K562 (cell line): ENCODE measurements at regions of chr1 and their contacts with region 1.

Region 1: DNA sequence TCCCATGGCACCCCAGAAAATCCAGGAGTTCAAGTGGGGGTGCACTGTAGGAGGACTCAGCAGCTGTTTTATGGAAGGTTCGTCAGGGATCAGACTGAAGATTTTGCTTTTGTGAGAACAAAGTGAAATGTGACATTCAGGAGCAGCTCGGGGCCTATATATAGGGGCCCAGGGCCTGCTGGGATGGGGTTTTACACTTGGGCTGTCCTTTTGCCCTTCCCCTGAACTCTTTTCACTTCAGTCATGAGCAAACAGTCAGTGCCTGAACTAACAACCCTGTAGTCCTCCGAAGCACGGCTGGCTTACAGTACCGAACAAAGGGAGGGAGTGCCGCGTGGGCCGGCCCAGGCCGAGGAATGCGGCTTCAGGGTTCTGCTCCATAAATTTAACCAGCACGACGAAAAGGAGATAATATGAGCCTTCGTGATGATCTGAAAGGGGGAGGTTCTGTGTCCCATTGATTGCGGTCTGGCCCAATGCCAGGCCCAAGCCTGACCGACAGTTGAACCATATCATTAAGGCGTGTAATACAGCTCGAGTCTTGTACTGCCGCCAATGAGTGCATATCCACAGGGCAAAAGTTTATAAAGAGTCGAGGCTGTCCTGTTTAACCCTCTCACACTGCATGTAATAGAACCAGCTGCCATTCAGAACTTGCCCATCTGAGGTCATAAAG is 139.9 kb downstream of the DHRS3 start:
- DNase-seq: peak; percentile 86 to 99 (median 90)
- ATAC-seq: peak; percentile 86
- H3K4me3 ChIP-seq: no peak overlapping the region; the same call in 1 of the 2 replicates
- H3K27ac ChIP-seq: peak overlapping the region; percentile 92
- H3K4me1 ChIP-seq: peaks cover 48 to 92% of the 10 kb centered on the region in 2 experiments
- H3K27me3 ChIP-seq: no peaks in the 10 kb centered on the region
- CTCF ChIP-seq: no peak
- EP300 ChIP-seq: peak; percentile 94
- POLR2A ChIP-seq: peak; percentile 71
- RAD21 ChIP-seq: peak in 1 of 2 experiments; percentile 63; a peak in 3 of 4 replicates

Region 2: DNA sequence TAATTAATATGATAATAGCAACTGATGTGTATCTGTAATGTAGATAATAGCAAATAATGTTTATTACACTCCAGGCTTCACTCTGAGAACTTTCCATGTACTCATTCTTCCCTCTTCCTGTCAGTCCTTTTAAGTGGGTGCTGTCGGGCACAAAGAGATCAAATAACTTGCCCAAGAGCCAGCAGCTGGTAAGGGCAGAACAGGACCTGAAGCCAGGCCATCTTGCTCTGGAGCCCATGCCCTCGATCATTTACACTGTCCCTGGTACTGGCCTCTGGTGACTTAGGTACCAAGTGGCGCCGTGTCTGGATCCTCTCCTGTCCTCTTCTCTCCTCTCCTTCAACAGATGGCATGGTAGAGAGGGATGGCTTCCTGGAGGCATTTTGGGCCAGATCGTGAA is 151.1 kb before region 1 on chr1:
- CTCF ChIA-PET with region 1: no interaction called
- POLR2A ChIA-PET with region 1: no interaction called
- in situ Hi-C with region 1: no loop called
- intact Hi-C with region 1: no loop called
- DNase-seq: no peak
- ATAC-seq: no peak
- H3K4me3 ChIP-seq: no peak overlapping the region
- H3K27ac ChIP-seq: no peak overlapping the region
- H3K4me1 ChIP-seq: no peaks in the 10 kb centered on the region
- H3K27me3 ChIP-seq: no peaks in the 10 kb centered on the region
- CTCF ChIP-seq: no peak
- EP300 ChIP-seq: no peak
- POLR2A ChIP-seq: no peak
- RAD21 ChIP-seq: no peak

Region 3: GRCh38 chr1:12407050-12407961 is 70.8 kb before region 1 on chr1:
- CTCF ChIA-PET with region 1: no interaction called
- POLR2A ChIA-PET with region 1: interaction called, 5 read pairs
- in situ Hi-C with region 1: no loop called
- intact Hi-C with region 1: loop called (anchors 5 kb)
- DNase-seq: peak; percentile 39 to 81 (median 60)
- ATAC-seq: peak; percentile 87
- H3K4me3 ChIP-seq: no peak overlapping the region
- H3K27ac ChIP-seq: peak overlapping the region; percentile 60
- H3K4me1 ChIP-seq: peaks cover 11 to 33% of the 10 kb centered on the region in 2 experiments; a peak in 4 of 5 replicates
- H3K27me3 ChIP-seq: no peaks in the 10 kb centered on the region
- CTCF ChIP-seq: peak; percentile 47 to 76 (median 60); a peak in 5 of 6 replicates
- EP300 ChIP-seq: no peak; the same call in 1 of the 2 replicates
- POLR2A ChIP-seq: no peak
- RAD21 ChIP-seq: peak; percentile 83 to 89

Region 4: DNA sequence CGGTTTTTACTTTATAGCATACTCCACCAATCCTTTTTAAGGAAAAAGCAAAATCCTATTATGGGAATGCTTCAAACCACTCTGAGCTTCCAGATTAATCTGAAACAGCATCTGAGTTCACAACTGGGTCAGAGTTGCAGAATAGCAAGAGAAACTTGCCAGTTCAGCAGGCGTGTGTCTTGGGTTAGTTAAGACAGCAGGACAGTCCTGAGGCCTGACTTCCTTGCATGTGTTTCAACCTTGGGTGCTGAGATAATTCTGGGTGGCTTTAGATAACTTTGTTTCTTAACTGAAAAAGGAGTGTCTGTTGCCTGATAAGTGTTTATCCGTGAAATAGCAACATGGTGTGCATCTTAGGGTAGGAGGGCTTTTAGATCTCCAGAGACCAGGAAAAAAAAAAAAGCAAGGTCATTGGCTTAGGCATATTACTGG is 29.3 kb before region 1 on chr1:
- CTCF ChIA-PET with region 1: no interaction called
- POLR2A ChIA-PET with region 1: interaction called, 14 read pairs
- in situ Hi-C with region 1: no loop called
- intact Hi-C with region 1: loop called (anchors 1 kb)
- DNase-seq: peak; percentile 76 to 99 (median 85)
- ATAC-seq: peak; percentile 94
- H3K4me3 ChIP-seq: no peak overlapping the region
- H3K27ac ChIP-seq: peak overlapping the region; percentile 95
- H3K4me1 ChIP-seq: peaks cover 29 to 87% of the 10 kb centered on the region in 2 experiments
- H3K27me3 ChIP-seq: no peaks in the 10 kb centered on the region
- CTCF ChIP-seq: 0 out of 6 replicates have a peak, but pooled peaks of 1 of the 3 experiments have one; percentile 6
- EP300 ChIP-seq: peak; percentile 100
- POLR2A ChIP-seq: no peak
- RAD21 ChIP-seq: peak; percentile 33 to 52; a peak in 2 of 4 replicates

Region 5: DNA sequence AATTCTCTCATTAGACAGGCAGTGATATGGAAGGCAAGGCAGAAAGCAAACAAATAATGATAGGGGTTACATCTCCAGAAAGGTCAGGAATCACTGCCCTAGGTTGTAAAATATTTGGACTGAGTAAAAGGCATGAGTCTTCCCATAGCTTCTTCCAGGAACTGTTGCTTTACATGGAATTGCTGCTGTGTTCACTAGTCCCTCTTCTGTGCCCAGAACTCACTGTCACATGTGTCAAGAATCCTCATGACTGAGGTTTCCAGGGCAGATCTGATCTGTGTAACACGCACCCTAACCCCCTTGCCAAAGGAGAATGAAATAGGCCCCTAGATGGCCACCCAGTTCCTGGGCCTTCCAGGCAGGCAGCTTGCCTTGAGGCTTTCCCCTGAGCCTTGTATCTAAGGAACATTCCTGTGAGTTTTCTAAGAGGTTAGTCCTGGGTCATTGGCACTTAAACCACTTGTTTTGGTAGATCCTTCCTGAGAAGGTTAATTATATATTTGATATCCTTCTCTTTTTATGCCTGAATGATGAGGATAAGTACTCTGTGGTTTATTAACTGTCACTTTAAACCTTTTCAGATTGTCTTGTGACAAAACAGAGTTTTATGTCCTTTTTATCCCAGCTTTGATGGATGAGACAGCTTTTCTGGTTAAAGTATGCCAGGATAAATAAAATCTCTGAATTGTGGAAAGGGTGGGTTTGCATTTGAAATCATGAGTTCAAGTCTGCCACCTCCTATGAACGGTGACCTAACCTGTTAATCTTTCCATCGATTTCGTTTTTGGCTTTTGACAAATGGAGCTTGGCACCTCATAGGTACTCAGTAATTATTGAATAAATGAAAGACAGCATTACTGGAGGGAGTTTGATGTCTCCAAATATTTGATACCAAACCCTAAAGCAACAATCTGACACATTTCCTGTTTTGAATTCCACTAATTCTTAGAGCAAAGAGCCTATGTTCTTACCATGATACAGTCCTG is 23.4 kb before region 1 on chr1:
- CTCF ChIA-PET with region 1: no interaction called
- POLR2A ChIA-PET with region 1: interaction called, 10 read pairs
- in situ Hi-C with region 1: no loop called
- intact Hi-C with region 1: loop called (anchors 1 kb)
- DNase-seq: peak in 3 of 4 experiments; percentile 44 to 57 (median 53)
- ATAC-seq: peak; percentile 64
- H3K4me3 ChIP-seq: no peak overlapping the region
- H3K27ac ChIP-seq: peak overlapping the region; percentile 75
- H3K4me1 ChIP-seq: peaks cover 24 to 61% of the 10 kb centered on the region in 2 experiments
- H3K27me3 ChIP-seq: no peaks in the 10 kb centered on the region
- CTCF ChIP-seq: no peak
- EP300 ChIP-seq: peak; percentile 45; the same call in 1 of the 2 replicates
- POLR2A ChIP-seq: no peak
- RAD21 ChIP-seq: peak in 1 of 2 experiments; percentile 43; a peak in 2 of 4 replicates

Region 6: GRCh38 chr1:12467570-12468286 is 10.3 kb before region 1 on chr1:
- CTCF ChIA-PET with region 1: interaction called, 3 read pairs
- POLR2A ChIA-PET with region 1: interaction called, 15 read pairs
- in situ Hi-C with region 1: no loop called
- intact Hi-C with region 1: no loop called
- DNase-seq: no peak
- ATAC-seq: no peak
- H3K4me3 ChIP-seq: no peak overlapping the region
- H3K27ac ChIP-seq: peak overlapping the region; percentile 13; the same call in 2 of the 3 replicates
- H3K4me1 ChIP-seq: peaks cover 45 to 78% of the 10 kb centered on the region in 2 experiments
- H3K27me3 ChIP-seq: no peaks in the 10 kb centered on the region
- CTCF ChIP-seq: no peak
- EP300 ChIP-seq: no peak
- POLR2A ChIP-seq: no peak
- RAD21 ChIP-seq: no peak

Region 7: GRCh38 chr1:12496154-12496913 is 18.3 kb after region 1 on chr1:
- CTCF ChIA-PET with region 1: no interaction called
- POLR2A ChIA-PET with region 1: interaction called, 38 read pairs
- in situ Hi-C with region 1: no loop called
- intact Hi-C with region 1: loop called (anchors 1 kb)
- DNase-seq: peak; percentile 33 to 86 (median 58)
- ATAC-seq: peak; percentile 79
- H3K4me3 ChIP-seq: no peak overlapping the region
- H3K27ac ChIP-seq: peak overlapping the region; percentile 87
- H3K4me1 ChIP-seq: peaks cover 28 to 44% of the 10 kb centered on the region in 2 experiments
- H3K27me3 ChIP-seq: no peaks in the 10 kb centered on the region
- CTCF ChIP-seq: no peak
- EP300 ChIP-seq: peak; percentile 56; the same call in 1 of the 2 replicates
- POLR2A ChIP-seq: no peak
- RAD21 ChIP-seq: peak in 1 of 2 experiments; percentile 40; a peak in 3 of 4 replicates

Region 8: GRCh38 chr1:12528021-12528852 is 50.2 kb after region 1 on chr1:
- CTCF ChIA-PET with region 1: no interaction called
- POLR2A ChIA-PET with region 1: interaction called, 5 read pairs
- in situ Hi-C with region 1: no loop called
- intact Hi-C with region 1: loop called (anchors 5 kb)
- DNase-seq: peak; percentile 62 to 93 (median 70)
- ATAC-seq: peak; percentile 78
- H3K4me3 ChIP-seq: no peak overlapping the region
- H3K27ac ChIP-seq: peak overlapping the region; percentile 89
- H3K4me1 ChIP-seq: peaks cover 44 to 49% of the 10 kb centered on the region in 2 experiments
- H3K27me3 ChIP-seq: no peaks in the 10 kb centered on the region
- CTCF ChIP-seq: no peak
- EP300 ChIP-seq: peak; percentile 44; the same call in 1 of the 2 replicates
- POLR2A ChIP-seq: no peak
- RAD21 ChIP-seq: peak in 1 of 2 experiments; percentile 19; a peak in 1 of 4 replicates